Right lobe of liver (tissue), 6 donors: ENCODE measurements at regions of chr19 and their contacts with region 1.

Region 1: DNA sequence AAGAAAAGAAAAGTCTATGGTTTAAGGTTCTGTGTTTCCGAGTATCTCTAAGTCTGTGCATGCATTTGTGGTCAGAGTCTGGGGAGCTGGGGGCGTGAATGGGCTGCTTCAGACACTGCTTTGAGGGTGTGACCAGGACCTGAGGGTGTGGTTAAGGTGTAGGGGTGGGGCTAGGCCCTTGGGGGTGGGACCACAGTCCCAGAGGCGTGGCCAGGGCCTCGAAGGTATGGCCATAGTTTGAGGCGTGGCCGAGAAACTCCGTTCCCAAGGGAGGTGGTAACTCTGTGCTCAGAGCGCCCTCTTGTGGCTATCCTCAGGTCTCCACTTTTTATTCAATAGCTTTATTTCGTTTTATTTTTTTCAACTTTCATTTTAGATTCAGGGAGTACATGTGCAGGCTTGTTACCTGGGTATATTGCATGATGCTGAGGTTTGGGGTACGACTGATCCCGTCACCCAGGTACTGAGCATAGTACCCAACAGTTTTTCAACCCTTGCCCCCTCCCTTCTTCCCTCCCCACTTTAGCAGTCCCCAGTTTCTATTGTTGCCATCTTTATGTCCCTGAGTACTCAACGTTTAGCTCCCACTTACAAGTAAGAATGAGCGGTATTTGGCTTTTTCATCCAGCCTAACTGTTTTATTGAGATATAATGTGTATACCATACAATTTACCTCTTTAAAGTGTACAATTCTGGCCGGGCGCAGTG is 7.0 kb upstream of the CBLC start:
- DNase-seq: peak; percentile 96 to 97 (median 96)
- ATAC-seq: peak; percentile 89 to 99 (median 95)
- H3K4me3 ChIP-seq: no peak overlapping the region
- H3K27ac ChIP-seq: no peak overlapping the region
- H3K4me1 ChIP-seq: peaks cover 0 to 28% (median 13%) of the 10 kb centered on the region in 4 donors
- H3K27me3 ChIP-seq: no peaks in the 10 kb centered on the region
- CTCF ChIP-seq: peak; percentile 81 to 91 (median 86)
- POLR2A ChIP-seq: no peak

Region 2: DNA sequence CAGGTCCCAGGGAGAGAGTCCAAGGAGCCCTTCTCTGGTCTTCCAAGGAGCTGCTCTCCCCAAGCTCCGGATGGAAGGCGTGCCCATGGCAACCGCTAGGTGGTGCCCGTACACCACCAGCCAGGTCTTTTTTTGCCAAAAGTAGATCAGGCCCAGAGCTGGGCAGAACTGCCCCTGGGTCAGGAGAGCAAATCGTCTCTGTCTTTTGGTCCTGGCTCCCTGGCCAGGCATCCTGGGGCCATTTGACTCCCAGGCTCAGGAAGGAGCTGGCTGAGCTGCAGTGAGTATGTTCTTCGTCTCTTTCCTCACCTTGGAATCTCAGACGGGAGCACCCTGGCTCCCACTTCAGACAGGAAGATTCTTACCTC is 46.8 kb before region 1 on chr19:
- intact Hi-C with region 1: loop called in 1 of 2 experiments (anchors 5 kb)
- DNase-seq: peak; percentile 80 to 91 (median 88)
- ATAC-seq: peak; percentile 68 to 80 (median 71)
- H3K4me3 ChIP-seq: peak overlapping the region; percentile 29 to 56 (median 35)
- H3K27ac ChIP-seq: peak overlapping the region; percentile 22 to 91 (median 82)
- H3K4me1 ChIP-seq: peaks cover 0 to 65% (median 22%) of the 10 kb centered on the region in 4 donors
- H3K27me3 ChIP-seq: no peaks in the 10 kb centered on the region
- CTCF ChIP-seq: peak; percentile 97 to 99 (median 99)
- POLR2A ChIP-seq: peak; percentile 82

Region 3: GRCh38 chr19:44987148-44987675 is 216.5 kb after region 1 on chr19:
- intact Hi-C with region 1: no loop called
- DNase-seq: no peak
- ATAC-seq: no peak
- H3K4me3 ChIP-seq: no peak overlapping the region
- H3K27ac ChIP-seq: no peak overlapping the region
- H3K4me1 ChIP-seq: no peaks in the 10 kb centered on the region
- H3K27me3 ChIP-seq: no peaks in the 10 kb centered on the region
- CTCF ChIP-seq: no peak
- POLR2A ChIP-seq: no peak